Activated T-helper 1 cell treated with anti-CD3 and anti-CD28 coated beads, Interleukin-12 subunit alpha, Interleukin-12 subunit beta, Interleukin-2, Interleukin-4 antibody, amounts not matched to agents 30 ng/mL and 10 ng/mL and 1 ng/mL, durations not matched to agents 14 hours and 24 hours and 36 hours (primary cell): ENCODE measurements at regions of chr6 and their contacts with region 1.

Region 1: DNA sequence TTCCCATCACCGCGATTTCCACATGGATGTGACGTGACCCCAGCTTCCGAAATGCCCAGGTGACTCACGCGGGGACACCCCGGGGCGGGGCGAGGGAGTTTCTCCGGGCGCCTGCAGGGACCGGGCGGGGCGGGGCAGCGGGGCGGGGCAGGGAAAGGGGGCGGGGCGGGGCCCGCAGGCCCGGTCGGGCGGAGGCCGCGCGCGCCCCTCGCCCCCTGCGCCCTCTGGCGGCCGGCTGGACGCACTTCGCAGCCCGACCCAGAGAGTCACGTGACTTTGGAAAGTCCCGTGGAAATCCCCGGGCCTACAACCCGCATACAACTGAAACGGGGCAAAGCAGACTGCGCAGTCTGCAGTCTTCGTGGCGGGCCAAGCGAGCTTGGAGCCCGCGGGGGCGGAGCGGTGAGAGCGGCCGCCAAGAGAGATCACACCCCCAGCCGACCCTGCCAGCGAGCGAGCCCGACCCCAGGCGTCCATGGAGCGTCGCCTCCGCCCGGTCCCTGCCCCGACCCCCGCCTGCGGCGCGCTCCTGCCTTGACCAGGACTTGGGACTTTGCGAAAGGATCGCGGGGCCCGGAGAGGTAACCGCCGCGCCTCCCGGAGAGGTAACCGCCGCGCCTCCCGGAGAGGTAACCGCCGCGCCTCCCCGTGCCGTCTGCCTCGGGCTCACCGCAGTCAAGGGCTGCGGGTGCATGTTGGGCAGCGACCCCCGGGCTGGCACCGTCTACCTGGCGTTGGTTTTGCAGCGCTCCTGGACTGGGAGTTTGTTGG is at the start of gene TNFAIP3:
- DNase-seq: peak; percentile 96
- H3K4me3 Mint-ChIP-seq: peak within 1 kb of the TSS; percentile 98
- H3K27ac Mint-ChIP-seq: peak within 1 kb of the TSS; percentile 99
- H3K4me1 Mint-ChIP-seq: peaks cover 46% of the 10 kb centered on the region
- H3K27me3 Mint-ChIP-seq: no peaks in the 10 kb centered on the region
- total RNA-seq, gene TNFAIP3: 250 and 257 TPM in 2 replicates

Region 2: GRCh38 chr6:137717074-137718073 is 149.7 kb before region 1 on chr6:
- intact Hi-C with region 1: loop called (anchors 2 kb)
- DNase-seq: peak; percentile 81
- H3K4me3 Mint-ChIP-seq: peak overlapping the region; percentile 59
- H3K27ac Mint-ChIP-seq: peak overlapping the region; percentile 90
- H3K4me1 Mint-ChIP-seq: peaks cover 66% of the 10 kb centered on the region
- H3K27me3 Mint-ChIP-seq: peaks cover 5% of the 10 kb centered on the region

Region 3: GRCh38 chr6:137799950-137800568 is 67.0 kb before region 1 on chr6:
- intact Hi-C with region 1: loop called (anchors 1 kb)
- DNase-seq: peak; percentile 35
- H3K4me3 Mint-ChIP-seq: no peak overlapping the region
- H3K27ac Mint-ChIP-seq: peak overlapping the region; percentile 14
- H3K4me1 Mint-ChIP-seq: peaks cover 67% of the 10 kb centered on the region
- H3K27me3 Mint-ChIP-seq: no peaks in the 10 kb centered on the region

Region 4: DNA sequence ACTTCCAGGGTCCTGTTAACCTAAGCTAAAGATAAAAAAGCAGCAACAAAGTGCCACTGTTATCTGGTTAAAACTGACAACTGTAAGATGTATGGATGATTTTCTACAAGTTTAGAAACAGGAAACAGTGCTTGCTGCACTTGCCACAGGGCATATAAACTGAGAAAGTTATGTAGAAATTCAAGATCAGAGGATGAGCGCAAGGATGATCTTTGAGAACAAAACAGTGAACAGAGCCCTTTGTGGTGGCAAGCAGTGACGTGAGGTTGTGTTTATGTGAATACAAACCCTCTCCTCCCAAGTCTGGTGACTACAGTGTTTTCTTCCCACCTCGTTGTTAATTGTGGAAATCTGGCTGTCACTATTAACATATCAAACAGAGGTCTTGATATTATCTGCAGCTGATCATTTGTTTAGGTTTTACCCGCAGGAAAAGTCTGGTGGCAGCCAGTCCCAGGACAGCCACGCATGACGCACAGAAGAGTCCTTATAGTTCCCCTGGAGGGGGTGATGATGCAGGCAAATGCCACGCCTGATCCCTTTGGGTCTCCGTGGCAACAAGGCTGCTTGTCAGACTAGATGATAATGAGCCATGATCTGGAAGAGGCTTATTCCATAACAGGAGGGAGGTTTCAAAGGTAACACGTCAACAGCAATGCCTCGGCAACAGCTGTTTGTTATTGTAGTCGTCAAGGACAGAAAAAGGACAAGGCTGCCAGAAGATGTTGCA is 43.1 kb before region 1 on chr6:
- intact Hi-C with region 1: loop called (anchors 1 kb)
- DNase-seq: peak; percentile 68
- H3K4me3 Mint-ChIP-seq: peak overlapping the region; percentile 71
- H3K27ac Mint-ChIP-seq: peak overlapping the region; percentile 98
- H3K4me1 Mint-ChIP-seq: peaks cover 88% of the 10 kb centered on the region
- H3K27me3 Mint-ChIP-seq: no peaks in the 10 kb centered on the region

Region 5: GRCh38 chr6:137903933-137904821 is 37.1 kb after region 1 on chr6:
- intact Hi-C with region 1: loop called (anchors 1 kb)
- DNase-seq: no peak
- H3K4me3 Mint-ChIP-seq: peak overlapping the region; percentile 19
- H3K27ac Mint-ChIP-seq: peak overlapping the region; percentile 97
- H3K4me1 Mint-ChIP-seq: peaks cover 59% of the 10 kb centered on the region
- H3K27me3 Mint-ChIP-seq: no peaks in the 10 kb centered on the region

Region 6: GRCh38 chr6:137951064-137951597 is 84.0 kb after region 1 on chr6:
- intact Hi-C with region 1: no loop called
- DNase-seq: no peak
- H3K4me3 Mint-ChIP-seq: no peak overlapping the region
- H3K27ac Mint-ChIP-seq: no peak overlapping the region
- H3K4me1 Mint-ChIP-seq: peaks cover 47% of the 10 kb centered on the region
- H3K27me3 Mint-ChIP-seq: peaks cover 6% of the 10 kb centered on the region

Region 7: DNA sequence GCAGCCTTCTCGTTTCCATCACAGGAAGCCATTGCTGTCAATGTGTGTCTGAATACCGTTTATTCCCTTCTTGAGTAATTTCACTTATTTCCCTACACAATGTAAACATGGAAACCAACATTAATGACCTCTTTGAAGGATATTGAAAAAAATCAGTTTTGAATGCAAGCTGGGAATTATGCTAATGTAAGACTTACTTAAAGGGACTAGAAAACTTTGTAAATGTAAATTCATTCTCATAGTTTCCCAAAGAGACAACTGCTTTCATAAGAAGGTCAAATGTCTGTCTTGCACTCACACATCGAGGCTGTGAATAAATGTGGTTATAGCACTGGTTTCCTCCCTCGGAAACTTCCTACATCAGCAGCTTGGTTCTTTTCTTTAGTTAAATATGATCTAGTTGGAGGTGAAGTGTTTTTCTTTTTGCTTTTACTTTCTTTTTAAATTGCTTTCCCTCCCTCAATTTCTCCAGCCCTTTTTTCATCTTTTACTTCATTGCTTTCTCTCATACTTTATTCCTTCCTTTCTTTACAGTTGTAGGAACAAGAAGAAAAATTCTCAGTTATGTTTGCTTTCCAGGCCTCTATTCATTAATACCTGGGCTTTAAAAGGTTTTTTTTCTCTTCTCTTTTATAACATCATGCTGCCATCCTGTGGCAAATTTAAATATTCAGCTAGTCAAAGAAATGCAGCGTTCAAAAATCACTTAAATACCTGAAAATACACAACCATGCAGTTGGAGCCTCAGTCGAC is 108.3 kb after region 1 on chr6:
- intact Hi-C with region 1: loop called (anchors 1 kb)
- DNase-seq: peak; percentile 39
- H3K4me3 Mint-ChIP-seq: peak overlapping the region; percentile 69
- H3K27ac Mint-ChIP-seq: peak overlapping the region; percentile 91
- H3K4me1 Mint-ChIP-seq: peaks cover 71% of the 10 kb centered on the region
- H3K27me3 Mint-ChIP-seq: no peaks in the 10 kb centered on the region